GM18951 (cell line): ENCODE measurements at regions of chr10 and their contacts with region 1.

Region 1: DNA sequence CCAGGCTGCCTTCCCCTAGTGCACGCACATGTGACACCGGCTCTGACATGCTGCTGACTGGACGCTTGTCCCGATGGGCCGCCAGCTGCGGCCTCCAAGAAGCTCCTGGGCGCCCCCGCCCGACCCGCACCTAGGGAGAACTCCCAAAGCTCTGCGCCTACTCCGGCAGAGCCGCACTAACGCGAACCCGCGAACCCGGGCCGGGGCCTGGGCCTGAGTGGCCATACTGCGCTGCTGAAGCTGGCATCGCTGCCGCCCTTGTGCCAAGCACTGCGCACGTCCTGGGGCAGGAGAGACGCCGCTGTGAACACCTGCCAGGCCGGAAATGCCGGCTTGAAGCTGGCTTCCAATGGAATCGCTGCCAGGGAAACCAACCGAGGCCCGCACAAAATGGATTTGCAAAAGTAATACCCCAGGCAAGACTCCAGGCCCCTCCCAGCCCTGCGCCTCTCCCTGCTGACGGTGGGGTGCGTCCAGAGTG is 85.1 kb downstream of the WASHC2A start:
- POLR2A ChIP-seq: no peak

Region 2: DNA sequence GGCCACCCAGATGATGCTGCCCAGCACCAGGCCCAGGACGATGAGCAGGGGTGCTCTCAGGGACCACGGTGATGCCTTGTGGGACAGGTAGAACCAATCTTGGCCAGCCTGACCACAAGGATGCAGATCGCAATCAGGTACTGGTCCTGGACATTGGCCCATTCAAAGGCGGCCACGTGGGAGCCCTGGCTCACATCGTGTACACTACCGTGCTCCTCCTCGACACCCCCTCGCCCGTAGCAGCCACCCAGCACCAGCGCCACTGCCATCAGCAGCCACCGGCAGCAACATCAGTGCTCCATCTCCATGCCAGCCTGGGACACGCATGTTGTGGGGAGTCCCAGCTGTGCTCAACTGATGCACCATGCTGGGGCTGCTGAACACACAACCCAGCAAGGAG is 125.6 kb before region 1 on chr10:
- in situ Hi-C with region 1: loop called (anchors 5 kb)
- POLR2A ChIP-seq: no peak